ENCODE measurements at regions of chr14 and their contacts with region 1.

Region 1: DNA sequence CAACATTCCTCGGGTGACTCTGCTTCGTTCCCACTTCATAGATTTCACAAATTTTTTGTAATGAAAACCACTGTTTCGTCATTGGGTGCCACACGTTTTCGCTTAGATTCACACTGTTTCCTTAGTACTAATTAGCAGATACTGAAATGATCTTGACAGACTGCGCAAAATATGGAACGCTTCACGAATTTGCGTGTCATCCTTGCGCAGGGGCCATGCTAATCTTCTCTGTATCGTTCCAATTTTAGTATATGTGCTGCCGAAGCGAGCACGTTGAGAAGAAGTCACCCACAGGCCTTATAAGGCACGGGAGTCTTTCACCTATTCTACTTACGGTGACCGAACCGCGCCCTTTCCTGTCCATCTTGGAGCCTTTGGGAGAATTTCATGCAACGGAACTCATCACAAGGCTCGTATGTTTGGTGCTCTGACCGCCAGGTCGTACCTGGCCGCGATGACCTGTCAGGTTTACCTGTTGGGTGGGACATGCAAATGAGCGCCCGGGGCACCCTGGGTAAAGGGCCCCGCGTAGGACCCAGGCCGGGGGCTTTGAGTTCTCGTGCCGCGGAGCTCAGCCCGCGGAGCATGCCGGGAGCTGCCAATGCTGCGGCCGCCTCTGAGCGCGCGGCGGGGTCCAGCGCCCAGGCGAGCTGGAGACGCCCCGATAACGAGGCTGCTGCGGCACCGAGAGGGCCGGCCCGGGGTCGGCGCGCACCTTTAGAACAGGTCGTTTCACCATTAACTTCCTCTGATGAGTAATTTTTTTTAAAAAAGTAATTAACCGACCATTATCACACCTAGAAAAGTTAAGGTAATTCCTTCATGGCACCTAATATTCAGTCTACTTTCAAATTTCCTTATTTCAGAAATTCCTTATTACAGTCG is at the start of gene RNU6-8:
- DNase-seq: peak; percentile 88
- H3K4me3 ChIP-seq: peak within 1 kb of the TSS; percentile 55 to 92 (median 78)
- H3K27ac ChIP-seq: peak within 1 kb of the TSS; percentile 88
- H3K4me1 ChIP-seq: peaks cover 16% of the 10 kb centered on the region
- H3K27me3 ChIP-seq: peaks cover 6 to 17% of the 10 kb centered on the region in 2 experiments
- CTCF ChIP-seq: no peak
- POLR2A ChIP-seq: peak; percentile 46
- total RNA-seq, gene RNU6-8: not detected in 2 replicates

Region 2: GRCh38 chr14:31420319-31421111 is 782.7 kb before region 1 on chr14 and contains the start of gene HEATR5A:
- CTCF ChIA-PET with region 1: no interaction called
- POLR2A ChIA-PET with region 1: no interaction called
- dilution Hi-C with region 1: no loop called
- intact Hi-C with region 1: loop called (anchors 1 kb)
- DNase-seq: peak; percentile 96
- H3K4me3 ChIP-seq: peak within 1 kb of the TSS; percentile 83 to 86 (median 83)
- H3K27ac ChIP-seq: peak within 1 kb of the TSS; percentile 60
- H3K4me1 ChIP-seq: peaks cover 13% of the 10 kb centered on the region
- H3K27me3 ChIP-seq: no peaks in the 10 kb centered on the region
- CTCF ChIP-seq: peak in 1 of 2 donors; percentile 27
- POLR2A ChIP-seq: peak; percentile 99
- total RNA-seq, gene HEATR5A: 37.0 and 45.3 TPM in 2 replicates

Region 3: GRCh38 chr14:31456841-31457664 is 746.2 kb before region 1 on chr14 and contains the start of gene DTD2:
- CTCF ChIA-PET with region 1: no interaction called
- POLR2A ChIA-PET with region 1: no interaction called
- dilution Hi-C with region 1: no loop called
- intact Hi-C with region 1: loop called (anchors 5 kb)
- DNase-seq: peak; percentile 95
- H3K4me3 ChIP-seq: peak within 1 kb of the TSS; percentile 34 to 64 (median 63)
- H3K27ac ChIP-seq: peak within 1 kb of the TSS; percentile 70
- H3K4me1 ChIP-seq: peaks cover 2% of the 10 kb centered on the region
- H3K27me3 ChIP-seq: no peaks in the 10 kb centered on the region
- CTCF ChIP-seq: no peak
- POLR2A ChIP-seq: peak; percentile 88
- total RNA-seq, gene DTD2: 10.8 and 14.4 TPM in 2 replicates

Region 4: GRCh38 chr14:31530136-31530535 is 673.1 kb before region 1 on chr14:
- CTCF ChIA-PET with region 1: no interaction called
- POLR2A ChIA-PET with region 1: no interaction called
- dilution Hi-C with region 1: no loop called
- intact Hi-C with region 1: no loop called
- DNase-seq: no peak
- H3K4me3 ChIP-seq: no peak overlapping the region
- H3K27ac ChIP-seq: no peak overlapping the region
- H3K4me1 ChIP-seq: no peaks in the 10 kb centered on the region
- H3K27me3 ChIP-seq: peaks cover 0 to 6% of the 10 kb centered on the region in 2 experiments
- CTCF ChIP-seq: no peak
- POLR2A ChIP-seq: no peak

Region 5: DNA sequence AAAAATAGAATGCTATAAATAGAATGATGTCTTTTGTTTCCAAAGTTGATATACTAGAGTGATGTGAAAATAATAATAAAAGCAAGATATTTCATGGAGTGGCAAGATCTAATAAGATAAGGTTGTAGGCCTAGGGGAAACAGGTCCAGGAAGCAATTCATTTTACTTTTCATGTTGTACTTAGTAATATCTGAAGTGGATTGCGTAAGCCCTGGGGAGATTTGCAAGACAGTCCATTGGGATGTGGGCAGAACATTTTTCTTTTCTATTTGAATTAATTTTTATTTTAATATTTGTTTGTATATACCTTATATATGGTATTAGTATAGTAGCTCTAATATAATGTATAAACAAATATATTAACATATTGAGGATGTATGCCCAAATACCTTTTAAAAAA is 634.6 kb before region 1 on chr14:
- CTCF ChIA-PET with region 1: no interaction called
- POLR2A ChIA-PET with region 1: no interaction called
- dilution Hi-C with region 1: no loop called
- intact Hi-C with region 1: loop called (anchors 5 kb)
- DNase-seq: peak; percentile 36
- H3K4me3 ChIP-seq: no peak overlapping the region
- H3K27ac ChIP-seq: no peak overlapping the region
- H3K4me1 ChIP-seq: peaks cover 13% of the 10 kb centered on the region
- H3K27me3 ChIP-seq: no peaks in the 10 kb centered on the region
- CTCF ChIP-seq: no peak
- POLR2A ChIP-seq: no peak

Region 6: GRCh38 chr14:32417956-32418552 is 214.8 kb after region 1 on chr14:
- CTCF ChIA-PET with region 1: no interaction called
- POLR2A ChIA-PET with region 1: no interaction called
- dilution Hi-C with region 1: no loop called
- intact Hi-C with region 1: loop called (anchors 2 kb)
- DNase-seq: peak; percentile 89
- H3K4me3 ChIP-seq: no peak overlapping the region
- H3K27ac ChIP-seq: peak overlapping the region; percentile 54
- H3K4me1 ChIP-seq: peaks cover 36% of the 10 kb centered on the region
- H3K27me3 ChIP-seq: no peaks in the 10 kb centered on the region
- CTCF ChIP-seq: no peak
- POLR2A ChIP-seq: no peak

Region 7: DNA sequence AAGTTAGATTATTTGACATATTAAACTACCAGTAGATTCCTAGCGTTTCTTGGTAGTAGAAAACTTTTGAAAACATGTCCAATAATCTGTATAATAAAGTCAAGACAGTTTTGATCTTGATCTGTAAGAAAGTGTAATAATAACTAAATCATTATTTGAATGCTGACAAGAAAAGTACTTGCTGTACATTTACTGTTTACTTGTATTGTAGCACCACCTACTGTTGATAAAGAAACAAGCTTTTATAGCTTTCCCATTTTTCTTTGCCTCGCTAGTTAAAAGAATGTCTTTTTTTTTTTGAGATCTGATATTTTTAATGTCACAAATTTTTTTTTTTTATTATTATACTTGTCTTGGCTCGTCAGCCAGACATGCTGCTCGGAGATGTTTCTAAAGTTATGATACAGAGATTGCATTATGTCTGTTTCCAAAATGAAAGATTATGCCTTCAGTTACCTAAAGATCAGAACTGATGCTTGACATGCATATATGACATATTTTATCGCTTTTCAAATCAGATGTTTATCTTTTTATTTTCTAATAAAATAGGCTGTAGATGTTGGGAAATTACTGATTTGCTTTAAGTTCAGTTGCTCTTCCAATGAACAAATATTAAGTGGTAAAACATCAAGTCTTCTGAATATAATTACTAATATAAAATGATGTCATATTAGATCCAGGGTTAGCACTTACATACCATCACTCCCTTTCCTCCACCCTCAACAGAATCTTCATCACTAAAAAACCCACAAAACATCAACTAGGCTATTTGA is 266.3 kb after region 1 on chr14:
- CTCF ChIA-PET with region 1: interaction called, 3 read pairs
- POLR2A ChIA-PET with region 1: no interaction called
- dilution Hi-C with region 1: no loop called
- intact Hi-C with region 1: loop called (anchors 5 kb)
- DNase-seq: peak; percentile 62
- H3K4me3 ChIP-seq: no peak overlapping the region
- H3K27ac ChIP-seq: no peak overlapping the region
- H3K4me1 ChIP-seq: peaks cover 3% of the 10 kb centered on the region
- H3K27me3 ChIP-seq: no peaks in the 10 kb centered on the region
- CTCF ChIP-seq: peak; percentile 17 to 36
- POLR2A ChIP-seq: no peak

Measured in endothelial cell of umbilical vein (primary cell).